Activated CD4-positive, alpha-beta memory T cell treated with anti-CD3 and anti-CD28 coated beads for 36 hours (primary cell): ENCODE measurements at regions of chr18 and their contacts with region 1.

Region 1: GRCh38 chr18:77524909-77525308 is 275.3 kb downstream of the GALR1 start:
- DNase-seq: peak; percentile 12
- H3K4me3 Mint-ChIP-seq: no peak overlapping the region
- H3K27ac Mint-ChIP-seq: no peak overlapping the region
- H3K4me1 Mint-ChIP-seq: no peaks in the 10 kb centered on the region
- H3K27me3 Mint-ChIP-seq: peaks cover 10% of the 10 kb centered on the region

Region 2: GRCh38 chr18:76892832-76893231 is 632.1 kb before region 1 on chr18:
- CTCF ChIA-PET with region 1: no interaction called
- POLR2A ChIA-PET with region 1: no interaction called
- intact Hi-C with region 1: no loop called
- DNase-seq: no peak
- H3K4me3 Mint-ChIP-seq: no peak overlapping the region
- H3K27ac Mint-ChIP-seq: no peak overlapping the region
- H3K4me1 Mint-ChIP-seq: no peaks in the 10 kb centered on the region
- H3K27me3 Mint-ChIP-seq: no peaks in the 10 kb centered on the region

Region 3: DNA sequence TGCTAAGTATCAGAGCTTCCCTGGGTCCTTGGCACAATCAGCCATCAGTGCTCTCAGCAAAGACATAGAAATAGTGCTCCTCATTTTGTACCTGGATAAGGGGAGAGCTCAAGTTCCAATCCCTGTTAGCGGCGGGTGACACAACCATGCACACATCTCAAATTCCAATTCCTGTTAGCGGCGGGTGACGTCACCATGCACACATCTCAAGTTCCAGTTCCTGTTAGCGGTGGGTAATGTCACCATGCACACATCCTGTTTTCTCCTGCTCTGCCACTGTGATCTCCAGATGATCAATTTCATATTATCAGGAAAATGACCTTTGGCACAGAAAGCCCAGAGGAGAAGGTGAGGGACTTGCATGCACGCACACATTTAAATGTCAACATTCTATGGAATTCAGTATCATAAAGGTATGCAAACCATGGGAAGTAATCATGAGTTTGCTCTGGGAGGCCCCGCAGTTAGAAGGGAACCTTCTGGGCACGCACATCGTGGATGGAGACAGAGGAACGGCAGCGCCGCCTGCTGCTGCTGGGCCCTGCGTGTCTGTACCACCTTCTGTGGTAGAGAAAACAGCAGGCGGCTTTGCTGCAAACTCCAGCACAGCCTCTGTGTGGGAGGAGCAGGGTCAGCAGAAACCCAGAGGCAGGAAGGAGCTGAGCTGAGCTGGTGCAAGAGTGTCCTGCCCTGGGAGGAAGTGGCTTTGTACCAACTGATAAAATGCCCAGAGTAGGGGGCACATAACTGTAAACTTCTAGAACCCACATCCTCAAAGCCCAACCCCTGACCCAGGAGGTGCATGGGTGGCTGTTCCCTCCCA is 470.1 kb before region 1 on chr18:
- CTCF ChIA-PET with region 1: no interaction called
- POLR2A ChIA-PET with region 1: no interaction called
- intact Hi-C with region 1: no loop called
- DNase-seq: peak; percentile 90
- H3K4me3 Mint-ChIP-seq: peak overlapping the region; percentile 81
- H3K27ac Mint-ChIP-seq: peak overlapping the region; percentile 96
- H3K4me1 Mint-ChIP-seq: peaks cover 72% of the 10 kb centered on the region
- H3K27me3 Mint-ChIP-seq: no peaks in the 10 kb centered on the region

Region 4: GRCh38 chr18:77560341-77560992 is 35.6 kb after region 1 on chr18:
- CTCF ChIA-PET with region 1: no interaction called
- POLR2A ChIA-PET with region 1: no interaction called
- intact Hi-C with region 1: loop called (anchors 1 kb)
- DNase-seq: peak; percentile 25
- H3K4me3 Mint-ChIP-seq: no peak overlapping the region
- H3K27ac Mint-ChIP-seq: no peak overlapping the region
- H3K4me1 Mint-ChIP-seq: peaks cover 3% of the 10 kb centered on the region
- H3K27me3 Mint-ChIP-seq: peaks cover 15% of the 10 kb centered on the region

Region 5: GRCh38 chr18:78330761-78331160 is 805.9 kb after region 1 on chr18:
- CTCF ChIA-PET with region 1: no interaction called
- POLR2A ChIA-PET with region 1: no interaction called
- intact Hi-C with region 1: no loop called
- DNase-seq: no peak
- H3K4me3 Mint-ChIP-seq: no peak overlapping the region
- H3K27ac Mint-ChIP-seq: no peak overlapping the region
- H3K4me1 Mint-ChIP-seq: no peaks in the 10 kb centered on the region
- H3K27me3 Mint-ChIP-seq: no peaks in the 10 kb centered on the region